MCF 10A (cell line): ENCODE measurements at regions of chr16 and their contacts with region 1.

Region 1: GRCh38 chr16:67892899-67893742 is at the start of gene PSKH1:
- DNase-seq: peak; percentile 96
- H3K4me3 Mint-ChIP-seq: peak within 1 kb of the TSS; percentile 92
- H3K27ac Mint-ChIP-seq: peak within 1 kb of the TSS; percentile 92
- H3K4me1 Mint-ChIP-seq: peaks cover 13% of the 10 kb centered on the region
- H3K27me3 Mint-ChIP-seq: no peaks in the 10 kb centered on the region
- CTCF ChIP-seq: no peak
- total RNA-seq, gene PSKH1: 21.7 and 27.9 TPM in 2 replicates

Region 2: GRCh38 chr16:67773099-67773498 is 120.0 kb before region 1 on chr16:
- CTCF ChIA-PET with region 1: no interaction called
- POLR2A ChIA-PET with region 1: no interaction called
- intact Hi-C with region 1: no loop called
- DNase-seq: no peak
- H3K4me3 Mint-ChIP-seq: no peak overlapping the region
- H3K27ac Mint-ChIP-seq: no peak overlapping the region
- H3K4me1 Mint-ChIP-seq: peaks cover 6% of the 10 kb centered on the region
- H3K27me3 Mint-ChIP-seq: no peaks in the 10 kb centered on the region
- CTCF ChIP-seq: no peak

Region 3: GRCh38 chr16:67833418-67834241 is 59.5 kb before region 1 on chr16:
- CTCF ChIA-PET with region 1: no interaction called
- POLR2A ChIA-PET with region 1: interaction called, 11 read pairs
- intact Hi-C with region 1: no loop called
- DNase-seq: peak; percentile 87
- H3K4me3 Mint-ChIP-seq: peak overlapping the region; percentile 93
- H3K27ac Mint-ChIP-seq: peak overlapping the region; percentile 91
- H3K4me1 Mint-ChIP-seq: peaks cover 9% of the 10 kb centered on the region
- H3K27me3 Mint-ChIP-seq: no peaks in the 10 kb centered on the region
- CTCF ChIP-seq: no peak

Region 4: GRCh38 chr16:67910158-67910557 is 17.0 kb after region 1 on chr16:
- CTCF ChIA-PET with region 1: no interaction called
- POLR2A ChIA-PET with region 1: interaction called, 10 read pairs
- intact Hi-C with region 1: no loop called
- DNase-seq: peak; percentile 39
- H3K4me3 Mint-ChIP-seq: no peak overlapping the region
- H3K27ac Mint-ChIP-seq: no peak overlapping the region
- H3K4me1 Mint-ChIP-seq: no peaks in the 10 kb centered on the region
- H3K27me3 Mint-ChIP-seq: no peaks in the 10 kb centered on the region
- CTCF ChIP-seq: no peak

Region 5: DNA sequence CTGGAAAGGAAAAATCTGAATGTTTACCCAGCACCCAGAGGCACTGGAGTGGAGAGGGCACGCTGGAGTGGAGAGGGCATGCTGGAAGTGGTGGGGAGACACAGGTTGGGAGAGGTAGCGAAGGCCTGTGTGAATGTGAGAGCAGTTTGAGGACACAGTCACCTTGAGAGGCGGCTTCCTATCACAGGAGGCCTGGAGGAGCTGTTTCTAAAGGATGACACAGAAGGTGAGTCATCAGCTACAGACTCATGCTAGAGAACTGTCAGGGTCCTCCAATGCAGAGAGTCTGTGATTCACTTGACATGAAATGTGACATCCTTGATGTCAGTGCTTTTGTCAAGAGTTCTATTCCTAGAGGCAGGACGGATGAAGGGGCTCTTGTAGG is 24.7 kb after region 1 on chr16:
- CTCF ChIA-PET with region 1: interaction called, 4 read pairs
- POLR2A ChIA-PET with region 1: interaction called, 10 read pairs
- intact Hi-C with region 1: no loop called
- DNase-seq: peak; percentile 81
- H3K4me3 Mint-ChIP-seq: no peak overlapping the region
- H3K27ac Mint-ChIP-seq: peak overlapping the region; percentile 65
- H3K4me1 Mint-ChIP-seq: peaks cover 15% of the 10 kb centered on the region
- H3K27me3 Mint-ChIP-seq: no peaks in the 10 kb centered on the region
- CTCF ChIP-seq: no peak